ENCODE measurements at regions of chr2 and their contacts with region 1.

Region 1: DNA sequence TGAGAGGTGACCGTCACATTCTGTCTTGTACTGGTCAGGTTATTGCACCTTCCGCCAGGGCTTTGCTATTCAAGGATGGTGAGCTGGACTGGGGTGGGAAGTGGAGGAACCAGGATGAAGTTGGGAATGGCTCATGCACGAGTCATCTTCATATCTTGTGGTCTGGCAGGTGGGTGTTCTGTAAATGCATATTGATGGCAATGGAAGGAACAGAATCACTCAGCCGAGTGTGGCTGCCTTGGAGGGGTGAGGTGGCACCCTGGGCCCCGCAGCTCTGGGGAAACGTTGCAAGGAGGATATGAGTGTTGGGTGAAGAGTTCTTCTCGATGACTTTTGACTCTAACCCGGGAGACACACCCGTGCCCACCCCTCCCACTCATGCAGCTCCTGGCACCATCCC is 1.2 kb downstream of the NEU2 start:
- DNase-seq: peak; percentile 96
- ATAC-seq: peak; percentile 56
- H3K4me3 ChIP-seq: no peak overlapping the region
- H3K27ac ChIP-seq: peak overlapping the region; percentile 98
- H3K4me1 ChIP-seq: peaks cover 78% of the 10 kb centered on the region
- H3K27me3 ChIP-seq: no peaks in the 10 kb centered on the region
- CTCF ChIP-seq: no peak

Region 2: GRCh38 chr2:232876078-232876977 is 157.3 kb before region 1 on chr2:
- CTCF ChIA-PET with region 1: no interaction called
- POLR2A ChIA-PET with region 1: no interaction called
- intact Hi-C with region 1: loop called (anchors 2 kb)
- DNase-seq: peak; percentile 80
- ATAC-seq: peak; percentile 68
- H3K4me3 ChIP-seq: peak overlapping the region; percentile 85
- H3K27ac ChIP-seq: peak overlapping the region; percentile 12
- H3K4me1 ChIP-seq: peaks cover 17% of the 10 kb centered on the region
- H3K27me3 ChIP-seq: no peaks in the 10 kb centered on the region
- CTCF ChIP-seq: 0 out of 2 replicates have a peak, but pooled peaks have one; percentile 10

Region 3: GRCh38 chr2:232979871-232980461 is 53.7 kb before region 1 on chr2:
- CTCF ChIA-PET with region 1: interaction called, 21 read pairs
- POLR2A ChIA-PET with region 1: interaction called, 3 read pairs
- intact Hi-C with region 1: loop called (anchors 1 kb)
- DNase-seq: peak; percentile 95
- ATAC-seq: peak; percentile 91
- H3K4me3 ChIP-seq: no peak overlapping the region
- H3K27ac ChIP-seq: peak overlapping the region; percentile 90
- H3K4me1 ChIP-seq: peaks cover 36% of the 10 kb centered on the region
- H3K27me3 ChIP-seq: no peaks in the 10 kb centered on the region
- CTCF ChIP-seq: peak; percentile 67

Region 4: DNA sequence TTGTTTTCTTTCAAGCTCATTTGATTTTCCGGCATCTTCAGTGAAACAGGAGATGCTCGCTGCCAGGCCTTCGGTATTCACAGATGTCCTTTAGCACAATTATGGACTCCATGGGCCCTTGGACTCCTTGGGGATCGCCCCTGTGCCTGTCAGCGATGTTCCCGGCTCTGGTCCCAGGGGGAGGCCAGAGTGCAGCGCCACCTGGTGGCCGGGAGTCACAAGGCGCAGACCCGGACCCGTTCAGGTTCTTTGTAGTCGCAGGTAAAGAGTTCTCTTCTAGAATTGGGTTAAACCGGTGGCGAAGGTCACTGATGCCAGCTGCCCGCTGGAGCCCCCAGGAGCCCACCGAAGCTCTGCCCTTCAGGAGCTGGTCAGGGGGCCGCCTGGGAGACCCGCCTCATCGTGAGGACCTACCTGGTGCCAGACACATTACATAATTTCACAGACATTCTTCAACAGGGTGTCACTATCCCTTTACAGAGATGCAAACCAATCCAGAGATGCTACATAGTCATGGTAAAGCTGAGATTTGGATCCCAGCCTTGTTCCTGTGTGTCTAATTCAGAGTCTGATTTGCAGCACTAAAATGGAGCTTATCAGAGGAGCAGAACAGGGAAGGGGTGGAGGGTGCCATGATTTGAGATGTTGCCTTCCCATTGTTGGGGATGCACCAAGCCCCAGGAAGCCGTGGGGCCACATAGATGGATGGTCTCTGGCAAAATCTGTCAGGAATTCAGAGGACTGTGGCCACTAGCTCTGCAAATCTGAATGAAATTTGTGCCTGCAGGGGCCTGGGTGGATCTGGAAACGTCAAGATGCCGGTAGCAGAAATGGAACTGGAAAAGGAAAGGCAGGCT is 20.5 kb after region 1 on chr2:
- CTCF ChIA-PET with region 1: interaction called, 4 read pairs
- POLR2A ChIA-PET with region 1: interaction called, 4 read pairs
- intact Hi-C with region 1: loop called (anchors 1 kb)
- DNase-seq: peak; percentile 62
- ATAC-seq: no peak
- H3K4me3 ChIP-seq: no peak overlapping the region
- H3K27ac ChIP-seq: no peak overlapping the region
- H3K4me1 ChIP-seq: peaks cover 50% of the 10 kb centered on the region
- H3K27me3 ChIP-seq: no peaks in the 10 kb centered on the region
- CTCF ChIP-seq: peak; percentile 96

Region 5: DNA sequence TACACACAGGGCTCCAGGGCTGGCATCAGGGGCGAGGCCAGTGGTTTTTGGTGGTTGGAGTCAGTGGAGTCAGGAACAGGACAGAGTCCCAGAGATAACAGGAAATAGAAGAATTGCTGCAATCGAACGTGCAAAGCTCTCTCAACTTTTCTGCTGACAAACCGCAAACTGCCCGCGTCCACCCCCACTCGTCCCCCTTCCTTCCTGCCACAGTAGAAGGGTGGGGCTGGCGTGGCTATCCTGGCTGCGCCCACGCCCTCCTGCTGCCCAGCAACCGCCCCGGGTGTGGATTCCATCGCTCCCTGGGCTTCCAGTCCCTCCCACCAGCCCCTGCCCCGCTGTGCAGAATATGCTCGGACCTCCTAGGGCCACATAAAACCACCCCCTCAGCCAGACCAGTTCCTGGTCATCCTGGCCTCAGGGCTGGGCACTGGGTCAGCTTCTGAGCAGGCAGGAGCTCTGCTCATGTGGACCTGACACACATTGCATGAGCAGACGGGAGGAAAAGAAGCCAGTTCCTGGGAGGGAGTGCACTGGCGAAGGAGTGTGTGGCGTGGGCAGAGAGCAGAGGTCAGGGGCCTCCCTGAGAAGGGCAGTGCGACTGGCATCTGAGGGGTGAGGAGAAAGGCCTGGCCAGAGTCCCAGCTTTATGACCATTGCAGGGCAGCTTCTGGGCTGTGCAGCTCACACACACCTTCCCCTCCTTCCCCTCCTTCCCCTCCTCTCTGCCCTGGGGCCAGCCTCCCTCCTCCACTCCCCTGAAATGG is 132.4 kb after region 1 on chr2:
- CTCF ChIA-PET with region 1: no interaction called
- POLR2A ChIA-PET with region 1: interaction called, 3 read pairs
- intact Hi-C with region 1: loop called (anchors 1 kb)
- DNase-seq: peak; percentile 84
- ATAC-seq: peak; percentile 91
- H3K4me3 ChIP-seq: peak overlapping the region; percentile 28; the same call in 1 of the 2 replicates
- H3K27ac ChIP-seq: peak overlapping the region; percentile 93
- H3K4me1 ChIP-seq: peaks cover 21% of the 10 kb centered on the region
- H3K27me3 ChIP-seq: no peaks in the 10 kb centered on the region
- CTCF ChIP-seq: no peak

Region 6: DNA sequence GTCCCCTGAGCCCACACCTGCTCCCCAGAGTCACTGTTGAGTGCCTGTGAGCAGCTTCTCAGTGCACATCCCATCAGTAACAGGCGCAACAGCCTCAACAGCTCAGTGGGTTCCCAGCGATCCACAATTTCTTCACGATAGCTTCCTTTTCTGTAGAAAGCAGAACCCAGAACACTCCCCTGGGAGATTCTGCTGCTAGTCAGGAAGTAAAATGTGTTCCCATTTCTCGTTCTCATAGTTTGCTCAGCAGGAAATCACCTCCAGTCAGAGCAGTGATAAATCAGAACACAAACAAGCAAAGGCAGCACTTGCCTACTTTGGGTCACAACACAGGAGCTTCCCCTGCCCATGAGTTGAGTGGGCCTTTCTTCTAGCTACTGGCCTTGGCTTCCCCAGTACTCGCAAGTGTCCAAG is 168.9 kb after region 1 on chr2:
- CTCF ChIA-PET with region 1: no interaction called
- POLR2A ChIA-PET with region 1: no interaction called
- intact Hi-C with region 1: no loop called
- DNase-seq: no peak
- ATAC-seq: no peak; the same call in 1 of the 2 replicates
- H3K4me3 ChIP-seq: no peak overlapping the region
- H3K27ac ChIP-seq: no peak overlapping the region
- H3K4me1 ChIP-seq: no peaks in the 10 kb centered on the region
- H3K27me3 ChIP-seq: no peaks in the 10 kb centered on the region
- CTCF ChIP-seq: no peak